ENCODE measurements at regions of chr12 and their contacts with region 1.

Region 1: GRCh38 chr12:105420659-105421240 is 90.3 kb downstream of the C12orf75 start:
- DNase-seq: peak; percentile 12 to 74 (median 55)
- ATAC-seq: peak; percentile 46
- H3K4me3 ChIP-seq: no peak overlapping the region
- H3K4me3 Mint-ChIP-seq: no peak overlapping the region
- H3K27ac ChIP-seq: no peak overlapping the region
- H3K27ac Mint-ChIP-seq: no peak overlapping the region
- H3K4me1 ChIP-seq: no peaks in the 10 kb centered on the region
- H3K4me1 Mint-ChIP-seq: no peaks in the 10 kb centered on the region
- H3K27me3 ChIP-seq: no peaks in the 10 kb centered on the region
- H3K27me3 Mint-ChIP-seq: no peaks in the 10 kb centered on the region
- CTCF ChIP-seq: peak; percentile 91

Region 2: DNA sequence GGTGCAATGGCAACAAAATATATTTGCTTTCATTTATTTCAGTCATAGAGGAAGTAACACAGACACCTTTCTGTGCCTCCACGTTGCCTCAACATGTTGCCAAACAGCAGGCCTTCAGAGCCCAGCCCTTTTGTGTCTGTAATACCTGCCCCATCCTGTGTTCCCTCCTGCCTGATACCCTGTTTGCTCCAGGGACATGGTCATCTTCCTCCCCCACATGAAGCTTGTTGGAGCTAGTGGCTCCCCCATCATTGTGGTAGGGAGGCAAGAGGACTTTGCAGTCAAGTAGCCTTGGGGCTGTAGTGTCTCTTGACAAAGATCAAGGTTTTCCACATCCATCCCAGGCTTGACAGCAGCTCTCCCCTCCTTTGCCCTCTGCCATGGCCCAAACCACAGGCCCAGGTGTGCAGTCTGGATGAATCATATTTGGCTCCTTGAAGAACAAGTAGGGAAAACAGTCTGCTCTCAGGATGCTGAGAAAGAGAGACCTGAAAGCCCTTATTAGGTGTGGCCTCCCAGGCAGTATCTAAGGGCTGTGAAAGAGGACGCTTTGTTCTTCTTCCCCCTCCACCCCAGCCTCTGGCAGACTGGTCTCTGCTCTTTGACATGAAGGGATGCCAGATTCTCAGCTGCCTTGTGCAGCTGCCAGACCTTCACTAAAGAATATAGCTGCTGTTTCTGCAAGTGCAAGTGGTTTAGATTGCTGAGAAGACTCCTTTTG is 238.8 kb after region 1 on chr12:
- CTCF ChIA-PET with region 1: no interaction called
- POLR2A ChIA-PET with region 1: no interaction called
- intact Hi-C with region 1: no loop called
- DNase-seq: no peak
- ATAC-seq: no peak
- H3K4me3 ChIP-seq: no peak overlapping the region
- H3K4me3 Mint-ChIP-seq: no peak overlapping the region
- H3K27ac ChIP-seq: no peak overlapping the region
- H3K27ac Mint-ChIP-seq: no peak overlapping the region
- H3K4me1 ChIP-seq: no peaks in the 10 kb centered on the region
- H3K4me1 Mint-ChIP-seq: no peaks in the 10 kb centered on the region
- H3K27me3 ChIP-seq: no peaks in the 10 kb centered on the region
- H3K27me3 Mint-ChIP-seq: peaks cover 4% of the 10 kb centered on the region
- CTCF ChIP-seq: no peak

Region 3: DNA sequence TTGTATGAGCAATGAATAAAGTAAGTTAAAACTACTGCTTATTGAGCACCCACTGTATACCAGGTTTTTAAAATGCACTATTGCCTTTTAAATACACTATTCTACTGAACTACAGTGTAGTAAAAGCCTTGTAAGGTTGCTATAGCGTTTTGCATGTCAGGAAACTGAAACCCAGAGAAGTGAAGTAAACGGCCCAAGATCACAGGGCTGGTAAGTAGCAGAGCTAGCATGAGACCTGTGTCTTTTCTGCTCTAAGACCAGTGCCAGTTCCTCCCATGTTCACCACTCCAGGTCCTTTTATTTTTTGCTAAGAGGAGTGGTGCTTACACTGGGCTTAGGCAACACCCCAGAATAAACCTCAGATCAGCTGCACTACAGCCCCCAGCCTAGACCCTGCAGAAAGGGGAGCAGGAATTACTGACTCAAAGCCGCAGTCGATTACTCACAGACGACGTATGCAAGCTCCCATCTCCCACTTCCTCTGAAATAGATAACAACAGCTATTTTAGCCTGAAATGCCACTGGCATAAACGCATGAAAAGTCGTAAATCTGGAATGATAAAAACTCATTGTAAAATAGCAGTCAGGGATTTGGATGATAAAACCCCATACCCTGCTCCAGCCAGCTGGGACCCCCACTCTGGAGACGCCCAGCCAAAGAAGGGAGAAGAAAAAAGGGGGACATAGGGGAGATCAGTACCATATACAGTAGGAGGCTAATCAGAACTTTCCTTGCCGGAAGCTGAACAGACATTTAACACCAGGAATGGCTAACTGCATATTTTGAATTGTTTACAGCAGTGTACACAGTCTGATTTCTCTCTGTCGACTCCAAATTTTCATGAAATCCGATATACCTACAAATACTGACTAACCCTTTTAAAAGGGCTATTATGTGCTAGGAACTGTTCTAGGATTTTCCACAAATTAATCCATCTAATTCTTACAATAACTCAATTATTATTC is 609.7 kb after region 1 on chr12:
- CTCF ChIA-PET with region 1: no interaction called
- POLR2A ChIA-PET with region 1: no interaction called
- intact Hi-C with region 1: no loop called
- DNase-seq: no peak
- ATAC-seq: no peak
- H3K4me3 ChIP-seq: no peak overlapping the region
- H3K4me3 Mint-ChIP-seq: no peak overlapping the region
- H3K27ac ChIP-seq: no peak overlapping the region
- H3K27ac Mint-ChIP-seq: no peak overlapping the region
- H3K4me1 ChIP-seq: no peaks in the 10 kb centered on the region
- H3K4me1 Mint-ChIP-seq: no peaks in the 10 kb centered on the region
- H3K27me3 ChIP-seq: no peaks in the 10 kb centered on the region
- H3K27me3 Mint-ChIP-seq: peaks cover 16% of the 10 kb centered on the region
- CTCF ChIP-seq: no peak

Region 4: DNA sequence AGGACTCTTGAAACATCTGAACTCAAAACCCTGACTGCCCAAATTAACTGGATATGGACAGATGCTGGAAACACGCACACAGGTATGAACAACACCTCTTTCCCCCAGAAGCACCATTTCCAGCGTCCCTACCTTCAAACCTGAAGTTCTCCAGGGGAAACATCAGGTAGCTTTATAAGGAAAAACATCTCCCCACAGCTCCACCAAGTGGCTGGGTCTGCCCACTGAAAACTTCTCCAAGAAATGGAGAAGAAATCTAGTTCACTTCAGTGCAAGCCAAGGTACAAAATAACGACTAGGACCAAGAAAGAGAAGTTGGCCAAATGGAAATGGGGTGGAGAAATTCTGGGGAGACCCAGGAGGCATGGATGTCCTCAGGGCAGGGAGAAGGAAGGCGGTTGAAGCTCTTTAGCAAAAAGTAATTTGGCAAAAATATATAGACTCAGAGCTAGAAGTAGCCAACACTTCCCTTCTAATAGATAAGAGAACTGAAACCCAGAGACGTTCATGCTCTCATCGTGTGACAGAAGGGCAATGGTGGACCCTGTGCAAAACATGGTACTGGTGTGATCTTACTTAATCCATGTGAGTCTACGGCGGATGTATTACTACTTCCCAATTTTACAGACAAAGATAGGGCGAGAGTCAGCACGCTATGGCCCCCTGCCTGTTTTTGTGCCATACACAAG is 728.5 kb after region 1 on chr12:
- CTCF ChIA-PET with region 1: interaction called, 11 read pairs
- POLR2A ChIA-PET with region 1: no interaction called
- intact Hi-C with region 1: no loop called
- DNase-seq: peak in 1 of 9 experiments; percentile 17
- ATAC-seq: no peak
- H3K4me3 ChIP-seq: no peak overlapping the region
- H3K4me3 Mint-ChIP-seq: no peak overlapping the region
- H3K27ac ChIP-seq: no peak overlapping the region
- H3K27ac Mint-ChIP-seq: no peak overlapping the region
- H3K4me1 ChIP-seq: no peaks in the 10 kb centered on the region
- H3K4me1 Mint-ChIP-seq: no peaks in the 10 kb centered on the region
- H3K27me3 ChIP-seq: no peaks in the 10 kb centered on the region
- H3K27me3 Mint-ChIP-seq: peaks cover 25% of the 10 kb centered on the region
- CTCF ChIP-seq: no peak